ENCODE measurements at regions of chr3 and their contacts with region 1.

Region 1: DNA sequence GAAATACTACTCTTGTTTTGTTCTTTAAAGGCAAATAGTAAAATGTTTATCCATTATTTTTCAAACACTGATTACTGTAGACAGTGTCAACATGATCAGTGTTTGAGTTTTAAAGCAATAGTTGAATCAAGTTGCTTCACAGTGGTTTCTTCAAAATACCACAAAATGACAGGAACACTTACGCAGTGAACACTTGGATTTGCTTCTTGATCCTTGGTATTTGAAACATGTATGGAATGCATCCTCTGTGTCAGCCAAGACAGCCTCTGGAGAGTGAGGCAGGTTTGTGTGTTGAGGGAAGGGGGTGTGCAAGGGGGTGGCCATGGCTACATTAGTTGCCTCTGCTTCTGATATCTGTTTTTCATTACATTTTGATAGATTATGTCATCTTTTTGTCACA is 413.0 kb downstream of the RBMS3 start:
- DNase-seq: peak; percentile 87
- ATAC-seq: peak; percentile 73
- H3K4me3 ChIP-seq: no peak overlapping the region
- H3K27ac ChIP-seq: peak overlapping the region; percentile 63; the same call in 1 of the 2 replicates
- H3K4me1 ChIP-seq: peaks cover 12% of the 10 kb centered on the region
- H3K27me3 ChIP-seq: no peaks in the 10 kb centered on the region
- CTCF ChIP-seq: no peak
- POLR2A ChIP-seq: no peak
- RAD21 ChIP-seq: no peak

Region 2: GRCh38 chr3:28916713-28917499 is 777.0 kb before region 1 on chr3:
- CTCF ChIA-PET with region 1: interaction called, 3 read pairs
- POLR2A ChIA-PET with region 1: no interaction called
- dilution Hi-C with region 1: no loop called
- in situ Hi-C with region 1: no loop called
- intact Hi-C with region 1: loop called (anchors 10 kb)
- DNase-seq: peak; percentile 65
- ATAC-seq: peak; percentile 66
- H3K4me3 ChIP-seq: peak overlapping the region; percentile 38
- H3K27ac ChIP-seq: peak overlapping the region; percentile 53
- H3K4me1 ChIP-seq: peaks cover 4% of the 10 kb centered on the region
- H3K27me3 ChIP-seq: no peaks in the 10 kb centered on the region
- CTCF ChIP-seq: peak; percentile 49
- POLR2A ChIP-seq: no peak
- RAD21 ChIP-seq: peak; percentile 70

Region 3: DNA sequence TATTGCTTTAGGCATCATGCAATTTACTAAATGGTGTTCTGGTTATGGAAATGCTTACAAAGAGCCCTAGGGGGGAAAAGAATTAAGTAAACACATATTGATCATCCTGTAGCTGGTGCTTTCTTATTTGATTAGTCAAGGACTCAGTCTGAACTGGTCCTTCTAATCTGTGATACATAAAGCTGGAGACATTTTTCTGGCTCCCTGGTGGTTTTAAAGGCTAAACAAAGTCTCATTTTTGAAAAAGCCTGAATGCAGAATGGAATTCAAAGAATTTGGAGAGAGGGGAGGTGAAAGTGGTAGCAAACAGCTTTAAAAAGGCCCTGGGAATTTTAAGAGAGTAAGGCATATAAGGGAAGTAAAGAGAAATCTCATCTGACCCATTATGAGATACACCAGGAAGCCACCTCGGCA is 263.3 kb before region 1 on chr3:
- CTCF ChIA-PET with region 1: no interaction called
- POLR2A ChIA-PET with region 1: no interaction called
- dilution Hi-C with region 1: no loop called
- in situ Hi-C with region 1: no loop called
- intact Hi-C with region 1: loop called (anchors 10 kb)
- DNase-seq: peak; percentile 75
- ATAC-seq: peak; percentile 77
- H3K4me3 ChIP-seq: no peak overlapping the region; the same call in 1 of the 2 replicates
- H3K27ac ChIP-seq: peak overlapping the region; percentile 87
- H3K4me1 ChIP-seq: peaks cover 9% of the 10 kb centered on the region
- H3K27me3 ChIP-seq: no peaks in the 10 kb centered on the region
- CTCF ChIP-seq: no peak
- POLR2A ChIP-seq: no peak
- RAD21 ChIP-seq: no peak

Region 4: DNA sequence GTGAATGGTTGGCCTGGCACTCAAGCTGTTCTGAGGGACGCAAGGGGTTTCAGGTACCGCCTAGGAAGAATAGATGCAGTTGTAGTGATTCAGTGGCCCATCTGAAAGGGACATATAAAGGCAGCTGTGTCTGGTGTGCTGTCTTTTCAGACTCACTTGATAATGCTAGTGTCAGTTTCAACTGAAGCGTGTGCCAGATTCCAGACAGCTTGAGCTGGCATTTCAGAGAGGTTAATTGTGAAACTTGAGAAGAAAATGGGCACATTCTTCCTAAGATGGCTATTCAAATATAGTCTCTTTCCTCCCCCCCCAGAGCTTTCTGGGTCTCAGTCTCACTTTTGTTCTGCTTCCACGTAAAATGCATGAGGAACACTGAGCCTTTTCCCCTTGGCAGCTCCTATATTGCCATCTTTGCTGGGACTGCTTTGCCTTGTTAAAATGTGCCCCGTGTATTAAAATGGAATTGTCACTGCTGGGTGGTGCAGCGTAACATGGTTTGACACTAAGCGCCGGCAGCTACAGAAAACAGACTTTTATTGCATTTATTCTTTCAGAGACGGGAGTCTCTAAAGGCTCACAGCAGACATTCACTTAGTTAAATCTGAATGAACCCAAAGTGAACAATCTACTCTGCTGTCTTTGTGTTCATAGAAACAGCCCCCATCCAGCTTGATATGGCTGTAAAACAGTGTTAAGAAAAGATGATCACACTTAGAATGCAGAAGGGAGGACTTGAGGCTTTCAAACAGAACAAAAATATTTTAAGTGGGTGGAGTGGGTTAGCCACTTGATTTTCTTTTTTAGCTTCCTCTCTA is 65.8 kb after region 1 on chr3:
- CTCF ChIA-PET with region 1: interaction called, 5 read pairs
- POLR2A ChIA-PET with region 1: no interaction called
- dilution Hi-C with region 1: no loop called
- in situ Hi-C with region 1: no loop called
- intact Hi-C with region 1: loop called (anchors 1 kb)
- DNase-seq: peak; percentile 21
- ATAC-seq: no peak
- H3K4me3 ChIP-seq: no peak overlapping the region
- H3K27ac ChIP-seq: peak overlapping the region; percentile 65
- H3K4me1 ChIP-seq: peaks cover 21% of the 10 kb centered on the region
- H3K27me3 ChIP-seq: no peaks in the 10 kb centered on the region
- CTCF ChIP-seq: no peak
- POLR2A ChIP-seq: no peak
- RAD21 ChIP-seq: no peak